ENCODE measurements at regions of chr15 and their contacts with region 1.

Region 1: GRCh38 chr15:59018833-59019232 is 31.4 kb downstream of the RNF111 start:
- DNase-seq: no peak
- H3K4me3 ChIP-seq: no peak overlapping the region
- H3K27ac ChIP-seq: no peak overlapping the region
- H3K4me1 ChIP-seq: peaks cover 0 to 6% (median 2%) of the 10 kb centered on the region in 4 donors
- H3K27me3 ChIP-seq: no peaks in the 10 kb centered on the region
- CTCF ChIP-seq: no peak
- EP300 ChIP-seq: no peak
- POLR2A ChIP-seq: no peak

Region 2: DNA sequence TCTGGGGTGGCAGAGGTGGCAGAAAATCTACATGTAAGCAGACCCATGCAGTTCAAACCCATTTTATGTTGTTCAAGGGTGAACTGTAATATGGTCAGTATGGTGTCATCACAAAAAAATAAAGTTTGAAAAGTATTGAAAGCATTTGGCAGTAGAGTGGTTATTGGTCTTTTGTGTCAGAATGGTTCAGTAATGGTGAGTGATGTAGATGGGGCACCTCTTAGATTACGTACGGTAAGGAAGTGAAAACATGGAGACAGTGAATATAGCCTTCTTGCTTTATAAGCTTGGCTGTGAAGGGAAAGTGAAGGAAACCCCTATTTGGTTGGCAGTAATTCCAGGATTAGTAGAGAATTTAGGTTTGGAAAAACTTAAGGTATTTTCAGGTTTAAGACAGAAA is 68.9 kb after region 1 on chr15:
- intact Hi-C with region 1: loop called (anchors 2 kb)
- DNase-seq: no peak
- H3K4me3 ChIP-seq: no peak overlapping the region
- H3K27ac ChIP-seq: no peak overlapping the region
- H3K4me1 ChIP-seq: no peaks in the 10 kb centered on the region
- H3K27me3 ChIP-seq: no peaks in the 10 kb centered on the region
- CTCF ChIP-seq: no peak
- EP300 ChIP-seq: no peak
- POLR2A ChIP-seq: no peak